Naive thymus-derived CD8-positive, alpha-beta T cell (primary cell): ENCODE measurements at regions of chr1 and their contacts with region 1.

Region 1: DNA sequence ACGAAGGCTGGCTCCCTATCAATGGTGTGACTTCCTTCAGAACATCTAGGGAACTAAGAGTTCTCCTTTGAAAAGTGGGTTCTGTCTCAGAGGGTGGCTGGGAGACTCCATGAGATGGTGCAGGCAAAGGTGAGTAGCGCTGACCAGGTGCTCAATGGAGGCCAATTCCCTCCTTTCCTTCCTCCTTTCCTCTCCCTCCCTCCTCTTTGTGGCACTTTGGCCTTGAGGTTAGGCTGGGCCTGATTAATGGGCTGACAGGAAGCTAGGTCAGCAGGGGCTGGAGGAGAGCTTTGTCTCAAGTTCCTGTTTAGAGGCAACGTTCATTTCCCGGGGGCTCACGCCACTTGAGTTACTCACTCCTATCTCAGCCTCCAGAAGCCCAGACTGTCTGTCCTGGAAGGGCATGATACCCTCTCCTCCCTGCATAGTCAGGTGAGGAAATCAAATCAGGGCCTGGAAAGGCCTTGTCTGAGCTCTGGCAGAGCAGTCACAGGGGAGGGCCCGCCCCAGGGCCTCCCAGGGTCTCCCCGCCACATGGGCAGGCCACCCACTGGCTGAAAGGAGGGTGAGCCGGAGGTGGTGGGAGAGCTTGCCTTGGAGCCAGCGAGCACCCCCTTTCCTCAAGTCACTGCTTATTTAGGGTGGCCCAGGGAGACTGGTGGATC is 58.4 kb upstream of the SSBP3 start:
- DNase-seq: no peak
- ATAC-seq: no peak
- H3K4me3 Mint-ChIP-seq: no peak overlapping the region
- H3K27ac Mint-ChIP-seq: peak overlapping the region in 3 of 10 donors; percentile 12 to 79 (median 73)
- H3K4me1 Mint-ChIP-seq: peaks cover 20 to 65% (median 55%) of the 10 kb centered on the region in 4 donors
- H3K27me3 Mint-ChIP-seq: no peaks in the 10 kb centered on the region

Region 2: DNA sequence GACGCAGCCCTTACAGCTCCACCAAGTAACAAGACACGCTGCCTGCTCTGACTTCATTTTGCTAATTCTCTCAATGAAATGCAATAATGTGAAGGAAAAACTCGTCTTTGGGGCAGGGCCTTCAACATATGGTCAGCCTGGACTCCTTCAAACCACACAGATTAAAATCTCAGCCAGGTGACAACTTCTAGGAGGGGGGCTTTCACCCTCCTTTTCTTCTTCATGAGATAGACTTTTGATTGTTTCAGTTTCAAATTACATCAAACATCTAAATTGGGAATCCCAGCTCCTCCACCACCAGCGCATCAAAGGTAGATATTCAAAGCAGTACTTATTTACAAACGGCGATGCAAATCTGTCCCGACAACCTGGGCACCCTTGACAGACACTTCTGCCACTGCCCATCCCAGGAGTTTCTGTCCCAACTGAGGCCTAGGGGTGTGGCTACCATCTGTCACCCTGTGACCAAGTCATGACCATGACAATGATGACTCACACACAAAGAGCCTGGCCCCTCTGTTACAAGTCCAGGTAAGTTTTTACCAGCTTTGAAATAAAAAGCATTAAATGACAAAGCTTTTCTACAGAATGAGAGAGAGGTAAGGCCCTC is 88.1 kb before region 1 on chr1:
- POLR2A ChIA-PET with region 1: no interaction called
- DNase-seq: peak in 1 of 10 donors; percentile 22
- ATAC-seq: peak in 1 of 2 donors; percentile 26
- H3K4me3 Mint-ChIP-seq: peak overlapping the region in 8 of 10 donors; percentile 4 to 63 (median 46)
- H3K27ac Mint-ChIP-seq: peak overlapping the region; percentile 41 to 89 (median 78)
- H3K4me1 Mint-ChIP-seq: peaks cover 65 to 98% (median 93%) of the 10 kb centered on the region in 4 donors
- H3K27me3 Mint-ChIP-seq: no peaks in the 10 kb centered on the region

Region 3: DNA sequence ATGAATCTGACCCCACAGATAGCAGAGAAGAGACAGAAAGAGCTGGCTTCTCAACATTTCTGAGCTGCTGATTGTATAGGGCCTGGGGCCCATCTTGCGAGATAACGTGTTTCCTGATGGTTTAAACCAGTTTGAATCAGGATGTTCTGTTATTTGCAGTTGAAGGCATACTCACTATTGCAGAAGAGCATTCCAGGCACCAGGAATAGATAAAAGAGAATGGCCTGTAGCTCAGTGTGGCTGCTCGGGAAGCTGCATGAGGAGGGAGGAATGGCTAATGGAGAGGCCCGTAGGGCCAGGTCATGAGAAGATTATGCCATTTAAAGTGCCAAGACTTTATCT is 35.5 kb before region 1 on chr1:
- POLR2A ChIA-PET with region 1: no interaction called
- DNase-seq: no peak
- ATAC-seq: no peak
- H3K4me3 Mint-ChIP-seq: no peak overlapping the region
- H3K27ac Mint-ChIP-seq: peak overlapping the region in 1 of 10 donors; percentile 46
- H3K4me1 Mint-ChIP-seq: peaks cover 0 to 4% (median 1%) of the 10 kb centered on the region in 4 donors
- H3K27me3 Mint-ChIP-seq: no peaks in the 10 kb centered on the region

Region 4: DNA sequence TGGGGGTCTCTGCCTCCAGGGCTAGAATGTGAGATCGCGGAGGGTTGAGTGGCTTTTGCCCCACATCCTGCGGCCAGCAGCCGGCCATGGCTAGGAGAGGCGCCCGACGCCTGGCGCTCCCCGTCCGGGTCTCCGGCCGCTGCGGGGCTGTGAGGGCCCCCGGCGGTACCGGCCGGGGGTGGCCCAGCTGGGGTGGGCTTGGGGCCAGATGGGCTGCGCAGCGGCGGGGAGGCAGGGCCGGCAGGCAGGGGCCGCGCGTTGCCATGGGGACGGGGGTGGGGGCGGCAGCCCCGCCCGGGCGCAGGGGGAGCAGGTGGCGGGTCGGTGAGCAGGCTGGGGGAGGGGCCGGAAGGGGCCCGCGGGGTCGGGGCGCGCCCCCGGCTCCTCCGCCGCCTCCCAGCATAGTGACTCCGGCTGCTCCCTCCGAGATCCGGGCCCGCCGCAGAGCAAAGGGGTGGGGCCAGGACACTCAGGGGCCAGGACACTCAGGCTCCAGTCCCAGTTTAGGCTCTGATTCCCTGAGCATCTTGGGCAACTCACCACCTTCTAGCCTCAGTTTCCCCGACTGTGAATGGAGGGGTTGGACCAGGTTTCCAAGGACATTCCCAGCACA is 10.1 kb after region 1 on chr1:
- POLR2A ChIA-PET with region 1: interaction called, 12 read pairs
- DNase-seq: peak in 6 of 10 donors; percentile 25 to 70 (median 38)
- ATAC-seq: peak; percentile 64
- H3K4me3 Mint-ChIP-seq: peak overlapping the region; percentile 76 to 91 (median 86)
- H3K27ac Mint-ChIP-seq: peak overlapping the region; percentile 86 to 97 (median 94)
- H3K4me1 Mint-ChIP-seq: peaks cover 21 to 61% (median 54%) of the 10 kb centered on the region in 4 donors
- H3K27me3 Mint-ChIP-seq: peaks cover 0 to 6% (median 0%) of the 10 kb centered on the region in 5 donors